B cell (primary cell): ENCODE measurements at regions of chr18 and their contacts with region 1.

Region 1: GRCh38 chr18:63979409-63979920 is 9.6 kb downstream of the SERPINB8 start:
- DNase-seq: peak; percentile 72
- ATAC-seq: peak; percentile 80
- H3K4me3 ChIP-seq: no peak overlapping the region
- H3K4me3 Mint-ChIP-seq: no peak overlapping the region
- H3K27ac ChIP-seq: no peak overlapping the region
- H3K27ac Mint-ChIP-seq: peak overlapping the region; percentile 1
- H3K4me1 ChIP-seq: peaks cover 15 to 21% of the 10 kb centered on the region in 2 donors
- H3K4me1 Mint-ChIP-seq: peaks cover 31% of the 10 kb centered on the region
- H3K27me3 ChIP-seq: no peaks in the 10 kb centered on the region
- H3K27me3 Mint-ChIP-seq: no peaks in the 10 kb centered on the region
- CTCF ChIP-seq: peak; percentile 91

Region 2: GRCh38 chr18:63823518-63824219 is 155.8 kb before region 1 on chr18:
- CTCF ChIA-PET with region 1: no interaction called
- POLR2A ChIA-PET with region 1: no interaction called
- intact Hi-C with region 1: loop called (anchors 2 kb)
- DNase-seq: peak; percentile 17
- ATAC-seq: no peak
- H3K4me3 ChIP-seq: no peak overlapping the region
- H3K4me3 Mint-ChIP-seq: no peak overlapping the region
- H3K27ac ChIP-seq: no peak overlapping the region
- H3K27ac Mint-ChIP-seq: no peak overlapping the region
- H3K4me1 ChIP-seq: no peaks in the 10 kb centered on the region
- H3K4me1 Mint-ChIP-seq: no peaks in the 10 kb centered on the region
- H3K27me3 ChIP-seq: peaks cover 0 to 8% (median 4%) of the 10 kb centered on the region in 4 experiments
- H3K27me3 Mint-ChIP-seq: peaks cover 18% of the 10 kb centered on the region
- CTCF ChIP-seq: peak; percentile 14

Region 3: DNA sequence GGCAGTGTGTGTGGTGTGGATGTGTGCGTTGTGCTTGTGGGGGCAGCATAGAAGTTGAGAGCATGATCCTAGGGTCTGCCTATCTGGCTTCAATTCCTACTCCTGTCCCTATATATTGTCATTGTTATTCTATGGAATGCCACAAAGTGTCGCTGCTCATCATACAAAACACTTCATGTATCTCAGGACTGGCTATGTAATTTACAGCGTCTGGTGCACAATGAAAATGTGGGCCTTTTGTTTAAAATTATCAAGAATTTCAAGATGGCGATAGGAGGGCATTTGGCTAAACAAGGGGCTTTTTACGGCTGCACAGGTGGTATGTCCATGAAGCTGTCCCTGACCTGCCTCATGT is 88.5 kb before region 1 on chr18:
- CTCF ChIA-PET with region 1: no interaction called
- POLR2A ChIA-PET with region 1: no interaction called
- intact Hi-C with region 1: loop called (anchors 1 kb)
- DNase-seq: no peak
- ATAC-seq: no peak
- H3K4me3 ChIP-seq: no peak overlapping the region
- H3K4me3 Mint-ChIP-seq: no peak overlapping the region
- H3K27ac ChIP-seq: no peak overlapping the region
- H3K27ac Mint-ChIP-seq: no peak overlapping the region
- H3K4me1 ChIP-seq: no peaks in the 10 kb centered on the region
- H3K4me1 Mint-ChIP-seq: no peaks in the 10 kb centered on the region
- H3K27me3 ChIP-seq: no peaks in the 10 kb centered on the region
- H3K27me3 Mint-ChIP-seq: peaks cover 12% of the 10 kb centered on the region
- CTCF ChIP-seq: no peak

Region 4: GRCh38 chr18:64244571-64244970 is 265.1 kb after region 1 on chr18:
- CTCF ChIA-PET with region 1: no interaction called
- POLR2A ChIA-PET with region 1: no interaction called
- intact Hi-C with region 1: no loop called
- DNase-seq: peak; percentile 11
- ATAC-seq: no peak
- H3K4me3 ChIP-seq: no peak overlapping the region
- H3K4me3 Mint-ChIP-seq: no peak overlapping the region
- H3K27ac ChIP-seq: no peak overlapping the region
- H3K27ac Mint-ChIP-seq: no peak overlapping the region
- H3K4me1 ChIP-seq: no peaks in the 10 kb centered on the region
- H3K4me1 Mint-ChIP-seq: no peaks in the 10 kb centered on the region
- H3K27me3 ChIP-seq: no peaks in the 10 kb centered on the region
- H3K27me3 Mint-ChIP-seq: no peaks in the 10 kb centered on the region
- CTCF ChIP-seq: no peak

Region 5: GRCh38 chr18:64546451-64546850 is 567.0 kb after region 1 on chr18:
- CTCF ChIA-PET with region 1: no interaction called
- POLR2A ChIA-PET with region 1: no interaction called
- intact Hi-C with region 1: no loop called
- DNase-seq: no peak
- ATAC-seq: no peak
- H3K4me3 ChIP-seq: no peak overlapping the region
- H3K4me3 Mint-ChIP-seq: no peak overlapping the region
- H3K27ac ChIP-seq: no peak overlapping the region
- H3K27ac Mint-ChIP-seq: no peak overlapping the region
- H3K4me1 ChIP-seq: no peaks in the 10 kb centered on the region
- H3K4me1 Mint-ChIP-seq: no peaks in the 10 kb centered on the region
- H3K27me3 ChIP-seq: no peaks in the 10 kb centered on the region
- H3K27me3 Mint-ChIP-seq: no peaks in the 10 kb centered on the region
- CTCF ChIP-seq: no peak